Aorta (tissue), 5 donors: ENCODE measurements at regions of chr19 and their contacts with region 1.

Region 1: GRCh38 chr19:8363803-8364771 is at the start of gene ANGPTL4:
- DNase-seq: peak; percentile 87 to 91
- ATAC-seq: peak; percentile 72
- H3K4me3 ChIP-seq: peak within 1 kb of the TSS; percentile 1 to 6
- H3K27ac ChIP-seq: peak within 1 kb of the TSS in 1 of 2 donors; percentile 62
- H3K4me1 ChIP-seq: no peaks in the 10 kb centered on the region
- H3K27me3 ChIP-seq: no peaks in the 10 kb centered on the region
- total RNA-seq, gene ANGPTL4: 39.9 to 45.1 TPM

Region 2: DNA sequence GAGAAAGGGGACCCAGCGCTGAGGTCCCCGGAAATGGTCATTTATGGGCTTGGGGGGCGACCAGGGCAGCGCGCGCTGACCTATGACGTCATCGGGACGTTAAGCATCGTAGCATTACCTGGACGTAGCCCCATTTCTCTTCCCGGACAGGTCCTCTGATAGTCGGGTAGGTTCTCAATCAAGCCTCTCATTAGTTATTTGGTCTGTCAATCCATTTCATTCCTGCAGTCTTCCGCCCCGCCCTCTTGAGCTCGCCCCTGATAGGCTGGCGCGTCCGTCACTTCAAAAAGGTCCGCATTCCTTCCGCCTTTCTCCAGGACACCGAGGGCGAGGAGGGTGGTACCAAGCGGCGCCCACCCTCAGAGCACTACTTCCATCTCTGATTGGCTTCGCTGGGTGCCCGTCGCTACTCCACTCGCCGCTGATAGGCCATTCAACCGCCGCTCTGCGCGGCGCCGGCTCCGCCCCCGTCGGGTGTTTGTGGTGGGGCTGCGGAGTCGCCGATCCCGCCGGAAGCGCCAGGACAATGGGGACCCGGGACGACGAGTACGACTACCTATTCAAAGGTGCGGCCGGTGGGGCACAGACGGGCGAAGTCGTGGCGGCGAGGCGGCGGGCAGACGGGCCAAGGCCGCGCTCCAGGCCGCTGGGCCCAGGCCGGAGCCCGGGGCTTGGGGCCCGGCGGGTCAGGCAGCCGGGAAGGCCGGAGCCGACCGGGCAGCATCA is 26.0 kb after region 1 on chr19 and contains the start of gene RAB11B:
- intact Hi-C with region 1: loop called (anchors 1 to 2 kb)
- DNase-seq: peak; percentile 99 to 100
- ATAC-seq: peak; percentile 98
- H3K4me3 ChIP-seq: peak within 1 kb of the TSS; percentile 76 to 97
- H3K27ac ChIP-seq: peak within 1 kb of the TSS; percentile 80 to 100
- H3K4me1 ChIP-seq: no peaks in the 10 kb centered on the region
- H3K27me3 ChIP-seq: no peaks in the 10 kb centered on the region
- total RNA-seq, gene RAB11B: 119 TPM